ENCODE measurements at regions of chr14 and their contacts with region 1.

Region 1: GRCh38 chr14:34331728-34332623 is 130.1 kb downstream of the SPTSSA start:
- DNase-seq: no peak
- H3K4me3 ChIP-seq: no peak overlapping the region
- CTCF ChIP-seq: peak; percentile 74

Region 2: DNA sequence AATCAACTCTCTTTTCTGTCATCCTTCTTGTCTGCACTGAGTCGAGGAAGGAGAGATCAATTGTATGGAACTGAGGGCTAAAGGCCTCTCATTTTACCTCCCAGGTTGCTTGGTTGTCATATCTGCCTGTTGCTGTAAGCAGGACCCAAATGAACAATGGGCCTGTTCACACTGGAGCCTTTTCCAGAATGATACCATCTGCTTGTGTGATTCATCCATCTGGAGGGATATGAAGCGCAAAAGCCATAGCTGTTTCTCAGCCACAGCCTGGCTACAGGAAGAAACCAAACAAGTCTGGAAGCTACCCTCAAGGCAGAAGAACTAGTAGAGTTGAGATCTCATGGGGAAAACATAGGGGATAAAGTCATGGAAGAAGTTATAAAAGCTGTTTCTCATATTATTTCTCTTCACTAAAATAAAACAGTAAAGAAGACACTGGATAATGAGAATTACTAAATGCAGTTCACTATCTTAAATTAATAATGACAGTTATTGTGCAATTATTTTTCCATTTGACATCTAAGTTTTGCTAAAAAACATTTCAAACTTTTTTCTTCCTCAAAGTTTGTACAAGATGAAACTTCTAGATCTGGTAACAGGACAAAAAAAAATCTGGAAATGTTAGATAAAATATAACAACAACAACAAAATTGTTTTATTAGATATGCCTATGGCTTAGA is 23.7 kb after region 1 on chr14:
- CTCF ChIA-PET with region 1: interaction called, 12 read pairs
- POLR2A ChIA-PET with region 1: no interaction called
- DNase-seq: peak; percentile 49
- H3K4me3 ChIP-seq: no peak overlapping the region
- CTCF ChIP-seq: no peak

Region 3: DNA sequence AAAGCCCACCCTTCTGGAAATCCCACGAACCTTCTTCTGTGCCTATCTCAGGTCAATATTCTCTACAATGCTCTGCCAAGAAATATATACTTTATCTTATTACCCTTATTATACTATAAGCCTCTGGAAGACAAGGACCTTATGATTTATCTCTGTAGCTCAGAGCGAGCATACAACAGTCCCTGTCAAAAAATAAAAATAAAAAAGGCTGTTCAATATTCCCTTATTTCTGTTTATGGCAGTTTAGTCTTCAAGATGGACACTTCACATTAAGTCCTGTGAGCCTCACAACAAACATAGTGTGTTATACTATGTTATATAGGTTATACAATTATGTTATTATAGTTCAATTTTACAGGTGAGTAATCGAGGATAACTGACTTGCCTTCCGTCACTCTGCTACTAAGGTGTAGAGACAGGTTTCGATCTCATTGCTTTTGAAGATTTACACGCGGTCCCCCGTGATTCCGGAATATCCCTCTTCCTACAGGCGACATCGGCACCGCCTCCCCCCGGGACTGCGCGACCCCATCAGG is 207.0 kb after region 1 on chr14:
- CTCF ChIA-PET with region 1: interaction called, 21 read pairs
- POLR2A ChIA-PET with region 1: no interaction called
- DNase-seq: no peak
- H3K4me3 ChIP-seq: peak overlapping the region; percentile 98
- CTCF ChIP-seq: no peak

Region 4: GRCh38 chr14:34604995-34605394 is 273.0 kb after region 1 on chr14:
- CTCF ChIA-PET with region 1: no interaction called
- POLR2A ChIA-PET with region 1: no interaction called
- DNase-seq: no peak
- H3K4me3 ChIP-seq: no peak overlapping the region
- CTCF ChIP-seq: no peak